A673 (cell line): ENCODE measurements at regions of chr17 and their contacts with region 1.

Region 1: GRCh38 chr17:7219812-7220581 is at the starts of genes ACADVL and DLG4:
- DNase-seq: peak; percentile 85
- H3K4me3 ChIP-seq: peak within 1 kb of the TSS; percentile 94
- H3K27ac ChIP-seq: peak within 1 kb of the TSS; percentile 93
- H3K4me1 ChIP-seq: peaks cover 36% of the 10 kb centered on the region
- H3K27me3 ChIP-seq: no peaks in the 10 kb centered on the region
- CTCF ChIP-seq: no peak
- total RNA-seq, gene ACADVL: 425 and 509 TPM in 2 replicates
- total RNA-seq, gene DLG4: 74.7 and 86.6 TPM in 2 replicates

Region 2: GRCh38 chr17:7060165-7060891 is 159.7 kb before region 1 on chr17:
- CTCF ChIA-PET with region 1: no interaction called
- POLR2A ChIA-PET with region 1: interaction called, 15 read pairs
- intact Hi-C with region 1: no loop called
- DNase-seq: peak; percentile 27
- H3K4me3 ChIP-seq: no peak overlapping the region
- H3K27ac ChIP-seq: no peak overlapping the region
- H3K4me1 ChIP-seq: no peaks in the 10 kb centered on the region
- H3K27me3 ChIP-seq: no peaks in the 10 kb centered on the region
- CTCF ChIP-seq: no peak

Region 3: DNA sequence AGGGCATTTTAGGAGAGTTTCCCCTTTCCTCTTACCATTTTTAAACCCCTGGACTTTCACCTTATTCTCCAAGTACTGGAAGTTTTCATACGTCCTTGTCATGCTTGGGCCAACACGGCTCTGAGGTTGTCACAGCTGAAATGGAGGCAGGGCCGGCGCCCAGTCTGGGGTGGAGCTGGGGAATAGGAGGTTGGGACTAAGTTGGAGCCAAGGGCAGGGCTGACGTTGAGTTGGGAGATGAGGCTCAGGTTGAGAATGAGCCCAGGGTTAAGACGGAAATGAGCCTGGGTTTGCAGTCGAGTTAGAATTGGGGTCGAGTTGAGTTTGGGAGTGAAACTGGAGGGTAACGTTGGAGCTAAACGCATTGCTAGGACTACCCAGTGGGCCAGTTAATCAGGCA is 141.3 kb before region 1 on chr17:
- CTCF ChIA-PET with region 1: no interaction called
- POLR2A ChIA-PET with region 1: no interaction called
- intact Hi-C with region 1: no loop called
- DNase-seq: no peak
- H3K4me3 ChIP-seq: no peak overlapping the region
- H3K27ac ChIP-seq: no peak overlapping the region
- H3K4me1 ChIP-seq: no peaks in the 10 kb centered on the region
- H3K27me3 ChIP-seq: no peaks in the 10 kb centered on the region
- CTCF ChIP-seq: no peak

Region 4: GRCh38 chr17:7147772-7148171 is 72.2 kb before region 1 on chr17:
- CTCF ChIA-PET with region 1: no interaction called
- POLR2A ChIA-PET with region 1: interaction called, 18 read pairs
- intact Hi-C with region 1: no loop called
- DNase-seq: no peak
- H3K4me3 ChIP-seq: no peak overlapping the region
- H3K27ac ChIP-seq: no peak overlapping the region
- H3K4me1 ChIP-seq: no peaks in the 10 kb centered on the region
- H3K27me3 ChIP-seq: no peaks in the 10 kb centered on the region
- CTCF ChIP-seq: no peak

Region 5: GRCh38 chr17:7296189-7296902 is 76.3 kb after region 1 on chr17:
- CTCF ChIA-PET with region 1: interaction called, 12 read pairs
- POLR2A ChIA-PET with region 1: no interaction called
- intact Hi-C with region 1: no loop called
- DNase-seq: peak; percentile 85
- H3K4me3 ChIP-seq: peak overlapping the region; percentile 24
- H3K27ac ChIP-seq: no peak overlapping the region
- H3K4me1 ChIP-seq: peaks cover 22% of the 10 kb centered on the region
- H3K27me3 ChIP-seq: no peaks in the 10 kb centered on the region
- CTCF ChIP-seq: peak; percentile 94

Region 6: GRCh38 chr17:7370853-7371252 is 150.9 kb after region 1 on chr17:
- CTCF ChIA-PET with region 1: interaction called, 13 read pairs
- POLR2A ChIA-PET with region 1: no interaction called
- intact Hi-C with region 1: no loop called
- DNase-seq: no peak
- H3K4me3 ChIP-seq: no peak overlapping the region
- H3K27ac ChIP-seq: no peak overlapping the region
- H3K4me1 ChIP-seq: no peaks in the 10 kb centered on the region
- H3K27me3 ChIP-seq: no peaks in the 10 kb centered on the region
- CTCF ChIP-seq: no peak

Region 7: GRCh38 chr17:7523033-7523432 is 303.0 kb after region 1 on chr17:
- CTCF ChIA-PET with region 1: no interaction called
- POLR2A ChIA-PET with region 1: no interaction called
- intact Hi-C with region 1: no loop called
- DNase-seq: peak; percentile 68
- H3K4me3 ChIP-seq: no peak overlapping the region
- H3K27ac ChIP-seq: no peak overlapping the region
- H3K4me1 ChIP-seq: no peaks in the 10 kb centered on the region
- H3K27me3 ChIP-seq: no peaks in the 10 kb centered on the region
- CTCF ChIP-seq: peak; percentile 76